CD4-positive, alpha-beta memory T cell (primary cell): ENCODE measurements at regions of chr3 and their contacts with region 1.

Region 1: GRCh38 chr3:57555738-57556458 is at the start of gene PDE12:
- DNase-seq: peak; percentile 82 to 87 (median 83)
- H3K4me3 ChIP-seq: peak within 1 kb of the TSS; percentile 85 to 89
- H3K4me3 Mint-ChIP-seq: peak within 1 kb of the TSS; percentile 92 to 100 (median 96)
- H3K27ac ChIP-seq: peak within 1 kb of the TSS; percentile 89
- H3K27ac Mint-ChIP-seq: peak within 1 kb of the TSS; percentile 97 to 100 (median 99)
- H3K4me1 ChIP-seq: peaks cover 43% of the 10 kb centered on the region
- H3K4me1 Mint-ChIP-seq: peaks cover 24 to 57% (median 36%) of the 10 kb centered on the region in 4 donors
- H3K27me3 ChIP-seq: no peaks in the 10 kb centered on the region
- H3K27me3 Mint-ChIP-seq: no peaks in the 10 kb centered on the region
- total RNA-seq, gene PDE12: 23.8 to 24.9 TPM

Region 2: GRCh38 chr3:57572096-57572495 is 16.2 kb after region 1 on chr3:
- CTCF ChIA-PET with region 1: no interaction called
- POLR2A ChIA-PET with region 1: interaction called, 17 read pairs
- intact Hi-C with region 1: no loop called
- DNase-seq: no peak
- H3K4me3 ChIP-seq: no peak overlapping the region
- H3K4me3 Mint-ChIP-seq: no peak overlapping the region
- H3K27ac ChIP-seq: no peak overlapping the region
- H3K27ac Mint-ChIP-seq: peak overlapping the region in 4 of 7 donors; percentile 36 to 59 (median 49)
- H3K4me1 ChIP-seq: no peaks in the 10 kb centered on the region
- H3K4me1 Mint-ChIP-seq: peaks cover 10 to 13% (median 11%) of the 10 kb centered on the region in 4 donors
- H3K27me3 ChIP-seq: no peaks in the 10 kb centered on the region
- H3K27me3 Mint-ChIP-seq: no peaks in the 10 kb centered on the region

Region 3: DNA sequence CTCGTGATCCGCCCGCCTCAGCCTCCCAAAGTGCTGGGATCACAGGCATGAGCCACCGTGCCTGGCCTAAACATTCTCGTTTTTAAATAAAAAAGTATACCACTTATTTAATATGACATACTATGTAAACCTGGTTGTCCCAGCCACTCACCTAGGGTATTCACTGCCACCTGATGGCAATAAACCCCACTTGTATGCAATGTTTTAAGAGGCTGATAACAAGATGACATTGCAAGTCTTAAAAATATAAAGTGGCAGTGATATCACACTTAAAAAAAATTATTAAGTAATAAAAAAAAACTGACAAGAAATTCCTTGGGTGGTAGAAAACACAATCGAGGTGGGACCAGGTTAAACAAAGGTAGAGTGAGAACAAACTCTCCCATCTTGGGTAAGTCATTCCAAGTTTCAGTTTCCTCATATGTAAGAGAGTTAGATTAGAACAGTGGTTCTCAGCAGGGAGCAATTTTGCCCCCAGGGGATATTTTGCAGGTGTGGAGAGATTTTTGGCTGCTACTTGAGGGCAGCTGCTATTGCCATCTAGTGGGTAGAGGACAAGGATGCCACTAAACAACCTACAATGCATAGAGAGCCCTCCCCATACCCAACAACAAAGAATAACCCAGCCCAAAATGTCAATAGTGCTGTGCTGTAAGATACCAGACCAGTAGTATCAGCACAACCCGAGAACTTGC is 26.7 kb after region 1 on chr3:
- CTCF ChIA-PET with region 1: no interaction called
- POLR2A ChIA-PET with region 1: interaction called, 10 read pairs
- intact Hi-C with region 1: no loop called
- DNase-seq: peak in 1 of 5 donors; percentile 14
- H3K4me3 ChIP-seq: no peak overlapping the region
- H3K4me3 Mint-ChIP-seq: no peak overlapping the region
- H3K27ac ChIP-seq: no peak overlapping the region
- H3K27ac Mint-ChIP-seq: peak overlapping the region in 4 of 7 donors; percentile 5 to 68 (median 45)
- H3K4me1 ChIP-seq: peaks cover 24% of the 10 kb centered on the region
- H3K4me1 Mint-ChIP-seq: peaks cover 16 to 37% (median 28%) of the 10 kb centered on the region in 4 donors
- H3K27me3 ChIP-seq: no peaks in the 10 kb centered on the region
- H3K27me3 Mint-ChIP-seq: no peaks in the 10 kb centered on the region

Region 4: GRCh38 chr3:57597122-57597923 is 41.4 kb after region 1 on chr3 and contains the start of gene ARF4:
- CTCF ChIA-PET with region 1: interaction called, 8 read pairs
- POLR2A ChIA-PET with region 1: interaction called, 169 read pairs
- intact Hi-C with region 1: loop called (anchors 1 kb)
- DNase-seq: peak; percentile 100
- H3K4me3 ChIP-seq: peak within 1 kb of the TSS; percentile 72 to 95
- H3K4me3 Mint-ChIP-seq: peak within 1 kb of the TSS; percentile 85 to 99 (median 99)
- H3K27ac ChIP-seq: peak within 1 kb of the TSS; percentile 100
- H3K27ac Mint-ChIP-seq: peak within 1 kb of the TSS; percentile 99 to 100 (median 100)
- H3K4me1 ChIP-seq: peaks cover 62% of the 10 kb centered on the region
- H3K4me1 Mint-ChIP-seq: peaks cover 34 to 72% (median 48%) of the 10 kb centered on the region in 4 donors
- H3K27me3 ChIP-seq: no peaks in the 10 kb centered on the region
- H3K27me3 Mint-ChIP-seq: no peaks in the 10 kb centered on the region
- total RNA-seq, gene ARF4: 55.8 to 58.5 TPM